Activated T-helper 1 cell treated with anti-CD3 and anti-CD28 coated beads, Interleukin-12 subunit alpha, Interleukin-12 subunit beta, Interleukin-2, Interleukin-4 antibody, amounts not matched to agents 30 ng/mL and 10 ng/mL and 1 ng/mL, durations not matched to agents 14 hours and 24 hours and 36 hours (primary cell): ENCODE measurements at regions of chr19 and their contacts with region 1.

Region 1: DNA sequence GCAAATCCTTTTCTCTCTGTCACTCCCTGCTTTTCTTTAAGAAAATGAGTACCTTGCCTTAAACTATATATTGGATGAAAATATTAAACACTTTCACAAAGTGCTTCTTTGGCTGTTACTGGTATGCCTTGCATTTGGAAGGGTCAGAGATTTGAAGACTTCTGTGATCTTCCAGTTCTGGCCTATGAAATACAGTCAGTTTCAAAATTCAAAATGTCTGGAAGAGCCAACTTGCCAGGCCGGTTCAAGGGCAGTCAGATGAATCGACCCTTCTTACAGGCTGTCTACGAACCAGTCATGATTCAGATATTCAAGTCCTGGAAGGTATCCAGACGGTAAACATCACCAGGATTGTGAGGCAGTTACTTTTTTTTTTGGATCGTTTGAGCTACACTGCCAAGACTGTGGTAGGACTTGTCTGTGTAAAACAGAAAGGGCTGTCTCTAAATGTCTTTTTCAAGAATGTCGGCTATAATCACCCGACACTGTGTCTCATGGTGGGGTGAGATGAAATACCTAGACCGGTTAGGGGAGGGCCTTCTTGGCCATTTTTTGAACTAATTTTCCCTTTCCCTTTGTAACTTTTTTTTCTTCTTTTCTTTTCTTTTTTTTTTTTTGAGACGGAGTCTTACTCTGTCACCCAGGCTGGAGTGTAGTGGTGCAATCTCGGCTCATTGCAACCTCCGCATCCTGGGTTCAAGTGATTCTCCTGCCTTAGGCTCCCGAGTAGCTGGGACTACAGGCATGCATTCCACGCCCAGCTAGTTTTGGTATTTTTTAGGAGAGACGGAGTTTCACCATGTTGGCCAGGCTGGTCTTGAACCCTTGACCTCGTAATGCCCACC is 11.2 kb downstream of the ACTN4 start:
- DNase-seq: no peak
- H3K4me3 Mint-ChIP-seq: no peak overlapping the region
- H3K27ac Mint-ChIP-seq: no peak overlapping the region
- H3K4me1 Mint-ChIP-seq: peaks cover 63% of the 10 kb centered on the region
- H3K27me3 Mint-ChIP-seq: no peaks in the 10 kb centered on the region

Region 2: GRCh38 chr19:38425810-38426466 is 232.7 kb before region 1 on chr19 and contains the start of gene RASGRP4:
- intact Hi-C with region 1: loop called (anchors 5 kb)
- DNase-seq: no peak
- H3K4me3 Mint-ChIP-seq: peak within 1 kb of the TSS; percentile 51
- H3K27ac Mint-ChIP-seq: peak within 1 kb of the TSS; percentile 90
- H3K4me1 Mint-ChIP-seq: peaks cover 32% of the 10 kb centered on the region
- H3K27me3 Mint-ChIP-seq: peaks cover 2% of the 10 kb centered on the region
- total RNA-seq, gene RASGRP4: 1.5 and 1.8 TPM in 2 replicates

Region 3: DNA sequence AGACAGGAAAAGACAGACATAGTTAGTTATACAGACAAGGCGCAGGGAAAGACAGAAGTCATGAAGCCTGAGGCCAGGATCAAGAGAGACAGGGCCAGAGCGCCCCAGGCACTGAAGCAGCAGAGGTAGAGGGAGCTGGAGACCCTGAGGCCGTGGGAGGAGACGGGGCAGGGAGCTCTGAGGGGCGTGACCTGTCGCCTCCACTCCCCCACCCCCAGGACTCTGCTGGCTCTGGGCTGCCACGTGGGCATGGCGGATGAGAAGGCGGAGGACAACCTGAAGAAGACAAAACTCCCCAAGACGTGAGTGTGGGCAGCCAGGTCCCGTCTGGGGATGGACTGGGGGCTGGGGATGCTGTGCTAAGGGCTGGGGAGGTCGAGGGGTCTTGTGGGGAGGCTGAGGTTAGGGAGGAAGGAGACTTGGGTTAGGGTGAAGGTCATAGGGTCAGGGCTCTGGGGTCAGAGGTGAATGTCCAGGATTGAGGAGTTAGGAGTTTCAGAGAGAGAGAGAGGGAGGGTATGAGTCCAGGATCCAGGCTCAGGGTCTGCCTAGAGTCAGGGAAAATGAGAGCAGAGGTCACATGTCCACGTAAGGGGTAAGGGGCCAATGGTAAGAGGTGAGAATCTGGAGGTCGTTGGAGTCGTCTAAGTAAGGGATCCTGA is 194.1 kb before region 1 on chr19:
- intact Hi-C with region 1: no loop called
- DNase-seq: no peak
- H3K4me3 Mint-ChIP-seq: no peak overlapping the region
- H3K27ac Mint-ChIP-seq: no peak overlapping the region
- H3K4me1 Mint-ChIP-seq: no peaks in the 10 kb centered on the region
- H3K27me3 Mint-ChIP-seq: no peaks in the 10 kb centered on the region

Region 4: DNA sequence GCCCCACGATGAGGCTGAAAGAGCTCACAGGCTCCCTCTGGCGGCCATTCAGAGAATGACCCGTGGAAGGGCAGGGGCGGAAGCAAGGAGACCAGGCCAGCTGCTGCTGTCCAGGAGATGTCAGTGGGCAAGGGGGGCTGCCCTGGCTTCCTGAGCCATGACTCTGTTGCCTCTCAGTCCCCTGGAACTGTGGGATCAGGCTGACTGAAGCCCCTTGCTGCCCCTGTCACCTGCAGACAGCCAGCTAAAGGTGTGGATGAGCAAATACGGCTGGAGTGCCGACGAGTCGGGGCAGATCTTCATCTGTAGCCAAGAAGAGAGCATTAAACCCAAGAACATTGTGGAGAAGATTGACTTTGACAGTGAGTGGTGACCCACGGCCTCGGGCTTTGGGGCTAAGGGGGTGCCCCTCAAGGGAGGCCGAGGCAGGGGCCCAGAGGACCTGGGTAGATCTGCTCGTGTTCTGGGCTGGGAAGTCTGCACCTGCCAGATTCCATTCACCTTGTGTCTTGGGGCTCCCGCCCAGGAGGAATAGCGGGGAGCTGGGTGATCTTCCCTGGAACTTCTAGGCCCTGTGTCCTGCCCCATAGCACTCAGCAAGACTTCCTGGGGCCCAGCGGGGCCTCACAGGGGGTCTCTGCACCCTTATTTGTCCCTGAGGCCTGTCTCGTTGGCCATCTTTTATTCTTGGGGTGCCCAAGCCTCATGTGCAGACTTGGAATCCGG is 23.8 kb before region 1 on chr19:
- intact Hi-C with region 1: loop called (anchors 1 kb)
- DNase-seq: peak; percentile 68
- H3K4me3 Mint-ChIP-seq: peak overlapping the region; percentile 43
- H3K27ac Mint-ChIP-seq: peak overlapping the region; percentile 83
- H3K4me1 Mint-ChIP-seq: peaks cover 36% of the 10 kb centered on the region
- H3K27me3 Mint-ChIP-seq: no peaks in the 10 kb centered on the region

Region 5: DNA sequence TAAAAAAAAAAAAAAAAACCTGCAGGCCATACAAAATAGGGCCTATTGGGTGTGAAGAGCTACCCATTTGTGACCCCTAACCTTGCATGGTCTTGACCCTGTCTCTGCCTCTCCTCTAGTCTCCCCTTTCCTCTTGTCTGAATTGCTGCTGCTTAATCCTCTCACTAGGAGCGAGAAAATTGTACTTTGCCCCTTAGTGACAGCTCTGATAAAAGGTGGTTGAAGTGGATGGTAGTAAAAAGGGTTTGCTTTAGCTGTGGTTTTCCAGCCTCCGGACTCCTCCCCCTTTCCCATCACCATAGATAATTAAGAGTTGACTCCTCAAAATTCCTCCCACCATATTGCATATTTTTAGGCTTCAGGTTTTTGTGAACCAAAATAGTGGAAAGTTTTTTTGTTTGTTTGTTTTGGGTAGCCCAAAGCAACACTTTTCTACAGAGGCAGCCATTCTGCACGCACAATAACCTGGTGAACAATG is 12.3 kb after region 1 on chr19:
- intact Hi-C with region 1: no loop called
- DNase-seq: no peak
- H3K4me3 Mint-ChIP-seq: no peak overlapping the region
- H3K27ac Mint-ChIP-seq: no peak overlapping the region
- H3K4me1 Mint-ChIP-seq: peaks cover 80% of the 10 kb centered on the region
- H3K27me3 Mint-ChIP-seq: no peaks in the 10 kb centered on the region

Region 6: DNA sequence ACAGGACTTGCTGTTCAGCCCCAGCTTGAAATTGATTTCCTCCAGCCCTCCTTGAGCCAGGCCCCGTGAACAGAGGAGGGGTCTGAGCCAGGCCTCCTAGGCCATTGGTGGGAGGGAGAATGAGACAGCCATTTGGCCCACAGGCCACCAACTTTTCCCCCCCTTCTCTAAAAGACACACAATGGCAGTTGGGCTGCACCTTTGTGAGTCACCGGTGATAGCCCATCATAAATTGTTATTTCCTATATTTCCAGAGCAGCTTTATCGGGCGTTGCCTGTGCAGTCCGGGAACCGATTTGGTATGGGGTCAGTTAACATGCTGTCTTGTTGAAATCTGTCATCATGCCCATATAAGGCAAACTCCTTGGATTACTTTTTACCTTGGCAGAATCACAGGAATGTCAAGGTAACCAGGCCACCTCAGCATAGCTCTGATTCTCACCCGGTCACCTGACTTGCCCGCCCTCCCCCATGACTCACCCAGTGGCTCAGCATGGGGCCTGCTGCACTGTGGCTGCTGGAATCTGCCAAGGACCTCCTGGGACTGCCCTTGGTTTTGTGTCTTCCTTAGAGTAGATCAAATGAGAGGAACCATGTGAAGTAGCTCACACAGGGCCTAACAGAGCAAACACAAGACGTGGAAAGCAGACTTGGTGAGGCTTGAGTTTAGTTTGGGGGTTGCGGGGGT is 24.9 kb after region 1 on chr19:
- intact Hi-C with region 1: loop called (anchors 1 kb)
- DNase-seq: no peak
- H3K4me3 Mint-ChIP-seq: peak overlapping the region; percentile 31
- H3K27ac Mint-ChIP-seq: peak overlapping the region; percentile 23
- H3K4me1 Mint-ChIP-seq: peaks cover 92% of the 10 kb centered on the region
- H3K27me3 Mint-ChIP-seq: no peaks in the 10 kb centered on the region

Region 7: DNA sequence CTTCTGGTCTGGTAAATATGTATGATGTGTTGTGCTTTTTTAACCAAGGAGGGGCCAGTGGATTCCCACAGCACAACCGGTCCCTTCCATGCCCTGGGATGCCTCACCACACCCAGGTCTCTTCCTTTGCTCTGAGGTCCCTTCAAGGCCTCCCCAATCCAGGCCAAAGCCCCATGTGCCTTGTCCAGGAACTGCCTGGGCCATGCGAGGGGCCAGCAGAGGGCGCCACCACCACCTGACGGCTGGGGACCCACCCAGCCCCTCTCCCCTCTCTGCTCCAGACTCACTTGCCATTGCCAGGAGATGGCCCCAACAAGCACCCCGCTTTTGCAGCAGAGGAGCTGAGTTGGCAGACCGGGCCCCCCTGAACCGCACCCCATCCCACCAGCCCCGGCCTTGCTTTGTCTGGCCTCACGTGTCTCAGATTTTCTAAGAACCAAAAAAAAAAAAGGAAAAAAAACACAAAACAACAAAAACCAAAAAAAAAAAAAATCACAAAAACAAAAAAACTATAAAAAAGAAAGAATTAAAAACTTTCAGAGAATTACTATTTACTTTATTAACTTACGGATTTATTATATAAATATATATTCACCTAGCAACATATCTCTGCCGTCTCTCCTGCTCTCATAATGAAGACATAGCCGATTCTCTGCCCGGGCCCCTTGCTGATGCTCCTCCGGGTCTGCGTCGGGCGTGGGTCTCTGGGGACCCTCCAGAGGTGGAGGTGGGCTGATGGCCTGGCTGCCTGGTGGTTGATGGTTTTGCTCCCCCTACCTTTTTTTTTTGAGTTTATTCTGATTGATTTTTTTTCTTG is 71.2 kb after region 1 on chr19:
- intact Hi-C with region 1: loop called (anchors 5 kb)
- DNase-seq: peak; percentile 58
- H3K4me3 Mint-ChIP-seq: no peak overlapping the region
- H3K27ac Mint-ChIP-seq: peak overlapping the region; percentile 55
- H3K4me1 Mint-ChIP-seq: peaks cover 39% of the 10 kb centered on the region
- H3K27me3 Mint-ChIP-seq: no peaks in the 10 kb centered on the region